Kidney (tissue), 22 donors: ENCODE measurements at regions of chrX and their contacts with region 1.

Region 1: DNA sequence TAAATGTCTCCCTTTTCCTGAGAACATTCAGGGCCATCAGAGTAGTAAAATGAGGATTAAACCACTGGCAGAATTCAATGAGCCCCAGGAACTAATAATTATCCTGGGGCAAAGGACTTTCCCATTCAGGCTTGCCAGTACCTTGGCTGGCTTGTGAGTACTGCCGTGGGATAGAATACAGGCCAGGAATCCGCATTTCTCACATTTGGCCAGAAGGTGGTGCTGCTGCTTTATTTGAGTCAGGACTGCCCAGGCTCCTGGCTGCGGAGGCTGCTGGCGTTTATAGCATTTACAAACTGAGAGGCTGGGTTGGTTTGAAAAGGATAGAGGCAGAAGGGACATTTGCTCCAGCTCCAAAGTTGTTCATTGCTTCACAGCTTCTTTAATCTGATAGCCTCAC is 91.4 kb downstream of the RTL9 start:
- DNase-seq: peak; percentile 79 to 86 (median 84)
- H3K4me3 ChIP-seq: no peak overlapping the region
- H3K27ac ChIP-seq: no peak overlapping the region
- H3K4me1 ChIP-seq: no peaks in the 10 kb centered on the region
- H3K27me3 ChIP-seq: no peaks in the 10 kb centered on the region
- CTCF ChIP-seq: peak; percentile 65

Region 2: GRCh38 chrX:110258552-110258951 is 191.5 kb before region 1 on chrX:
- intact Hi-C with region 1: no loop called
- DNase-seq: no peak
- H3K4me3 ChIP-seq: no peak overlapping the region
- H3K27ac ChIP-seq: no peak overlapping the region
- H3K4me1 ChIP-seq: peaks cover 0 to 4% (median 0%) of the 10 kb centered on the region in 3 donors
- H3K27me3 ChIP-seq: no peaks in the 10 kb centered on the region
- CTCF ChIP-seq: no peak

Region 3: GRCh38 chrX:110563282-110563681 is 113.2 kb after region 1 on chrX:
- intact Hi-C with region 1: no loop called
- DNase-seq: no peak
- H3K4me3 ChIP-seq: no peak overlapping the region
- H3K27ac ChIP-seq: no peak overlapping the region
- H3K4me1 ChIP-seq: no peaks in the 10 kb centered on the region
- H3K27me3 ChIP-seq: no peaks in the 10 kb centered on the region
- CTCF ChIP-seq: no peak

Region 4: DNA sequence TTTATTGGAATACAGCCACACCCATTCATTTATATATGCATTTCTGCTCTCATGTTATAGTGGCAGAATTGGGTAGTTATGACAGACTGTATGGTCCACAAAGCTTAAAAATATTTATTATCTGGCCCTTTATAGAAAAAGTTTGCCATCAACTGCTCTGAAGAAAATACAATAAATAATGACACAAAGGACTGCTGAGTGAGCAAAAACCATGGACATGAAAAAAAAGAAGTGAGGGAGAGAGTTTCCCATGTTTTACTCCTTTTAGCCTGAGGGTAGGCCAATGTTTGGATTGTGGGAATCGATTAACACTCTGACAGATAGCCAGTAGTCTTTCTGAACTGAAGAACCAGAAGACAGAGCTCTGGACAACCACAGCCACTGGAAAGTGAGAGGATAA is 196.3 kb after region 1 on chrX:
- intact Hi-C with region 1: no loop called
- DNase-seq: no peak
- H3K4me3 ChIP-seq: no peak overlapping the region
- H3K27ac ChIP-seq: no peak overlapping the region
- H3K4me1 ChIP-seq: no peaks in the 10 kb centered on the region
- H3K27me3 ChIP-seq: no peaks in the 10 kb centered on the region
- CTCF ChIP-seq: no peak

Region 5: GRCh38 chrX:110691446-110691845 is 241.4 kb after region 1 on chrX:
- intact Hi-C with region 1: no loop called
- DNase-seq: no peak
- H3K4me3 ChIP-seq: no peak overlapping the region
- H3K27ac ChIP-seq: no peak overlapping the region
- H3K4me1 ChIP-seq: no peaks in the 10 kb centered on the region
- H3K27me3 ChIP-seq: peaks cover 3% of the 10 kb centered on the region
- CTCF ChIP-seq: no peak

Region 6: DNA sequence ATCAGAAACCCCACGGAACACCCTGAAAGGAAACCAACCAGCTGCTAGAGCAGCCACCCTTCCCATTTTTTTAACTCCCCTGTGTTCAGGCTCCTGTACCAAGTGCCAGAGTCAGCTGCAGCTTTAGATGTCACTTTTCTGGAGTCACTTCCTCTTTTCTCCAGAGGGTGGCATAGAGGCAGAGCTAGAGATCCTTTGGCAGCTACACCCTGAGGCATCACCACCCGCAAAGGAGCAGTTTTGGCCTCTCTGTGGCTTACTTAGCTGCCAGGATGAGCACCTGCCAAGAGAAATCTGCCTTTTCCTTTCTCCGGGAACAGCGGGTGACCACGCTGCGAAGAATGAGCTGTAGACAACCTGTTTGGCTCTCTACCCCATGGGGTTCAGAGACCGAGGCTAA is 403.6 kb after region 1 on chrX:
- intact Hi-C with region 1: loop called (anchors 5 kb)
- DNase-seq: peak in 2 of 5 donors; percentile 31 to 41
- H3K4me3 ChIP-seq: no peak overlapping the region
- H3K27ac ChIP-seq: no peak overlapping the region
- H3K4me1 ChIP-seq: no peaks in the 10 kb centered on the region
- H3K27me3 ChIP-seq: no peaks in the 10 kb centered on the region
- CTCF ChIP-seq: no peak